Activated CD4-positive, alpha-beta T cell treated with anti-CD3 and anti-CD28 coated beads, Interleukin-2, amount 10 ng/mL, durations not matched to agents 24 days and 14 days (primary cell): ENCODE measurements at regions of chr10 and their contacts with region 1.

Region 1: DNA sequence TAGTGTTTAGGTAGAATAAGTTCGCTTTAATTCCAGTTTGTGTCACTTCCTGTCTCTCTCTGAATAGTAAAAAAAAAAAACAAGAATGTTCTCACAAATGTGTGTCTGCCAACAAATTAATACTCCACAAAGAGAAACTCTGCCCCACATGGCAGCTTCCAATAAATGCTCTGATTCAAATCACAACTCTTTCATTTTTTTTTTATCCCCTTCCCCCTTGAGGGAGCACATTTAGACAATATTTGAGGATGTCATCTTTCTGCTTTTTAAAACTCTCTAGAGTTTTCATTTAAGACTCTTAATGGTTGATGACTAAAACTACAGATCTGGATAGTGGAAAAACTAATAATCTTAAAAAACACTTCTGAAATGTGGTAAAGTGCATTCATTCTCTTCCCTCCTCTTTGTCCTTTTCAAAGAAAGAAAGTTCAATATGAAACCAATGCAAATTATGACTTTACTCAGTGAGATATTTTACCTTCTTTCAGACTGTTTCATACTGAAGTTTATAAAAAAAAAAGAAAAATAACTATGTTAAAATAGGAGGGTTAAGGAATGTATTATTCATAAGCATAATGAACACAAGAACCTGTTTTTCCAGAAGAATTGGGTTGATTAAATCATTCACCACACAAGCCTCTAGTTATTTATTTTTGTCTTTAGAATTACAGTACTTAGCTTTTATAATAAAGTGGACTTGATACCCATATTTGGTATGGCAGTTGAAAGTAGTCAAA is 42.3 kb downstream of the ARID5B start:
- DNase-seq: peak; percentile 73
- H3K4me3 Mint-ChIP-seq: peak overlapping the region; percentile 82
- H3K27ac Mint-ChIP-seq: peak overlapping the region; percentile 93
- H3K4me1 Mint-ChIP-seq: peaks cover 49% of the 10 kb centered on the region
- H3K27me3 Mint-ChIP-seq: no peaks in the 10 kb centered on the region

Region 2: DNA sequence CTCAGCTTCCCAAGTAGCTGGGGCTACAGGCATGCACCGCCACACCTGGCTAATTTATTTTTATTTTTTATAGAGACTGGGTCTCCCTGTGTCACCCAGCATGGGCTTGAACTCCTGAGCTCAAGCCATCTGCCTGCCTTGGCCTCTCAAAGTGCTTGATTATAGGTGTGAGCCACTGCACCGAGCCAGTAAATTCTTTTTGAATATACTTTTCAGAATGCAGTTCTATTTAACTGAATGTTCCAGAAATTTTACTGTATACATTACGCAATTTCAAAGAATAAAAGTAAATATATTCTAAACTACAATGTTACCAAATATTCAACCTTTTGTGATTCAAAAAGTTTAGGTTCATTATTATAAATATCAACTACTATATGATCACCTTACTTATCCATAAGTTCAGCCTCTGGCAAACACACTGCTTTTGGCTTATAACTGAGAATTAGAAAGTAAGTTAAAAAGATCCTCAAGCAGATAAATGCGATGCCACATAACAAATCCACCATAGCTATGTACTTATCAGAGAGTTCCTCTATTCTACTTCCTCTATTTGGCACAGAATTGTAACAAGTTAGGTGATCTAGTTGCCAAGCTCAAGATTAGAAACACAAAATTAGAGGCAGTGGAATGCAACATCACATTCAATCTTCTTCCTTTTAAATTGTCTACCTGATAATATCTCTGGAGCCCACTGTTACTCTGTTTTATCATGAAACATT is 1672.4 kb before region 1 on chr10:
- intact Hi-C with region 1: no loop called
- DNase-seq: no peak
- H3K4me3 Mint-ChIP-seq: no peak overlapping the region
- H3K27ac Mint-ChIP-seq: no peak overlapping the region
- H3K4me1 Mint-ChIP-seq: no peaks in the 10 kb centered on the region
- H3K27me3 Mint-ChIP-seq: no peaks in the 10 kb centered on the region

Region 3: DNA sequence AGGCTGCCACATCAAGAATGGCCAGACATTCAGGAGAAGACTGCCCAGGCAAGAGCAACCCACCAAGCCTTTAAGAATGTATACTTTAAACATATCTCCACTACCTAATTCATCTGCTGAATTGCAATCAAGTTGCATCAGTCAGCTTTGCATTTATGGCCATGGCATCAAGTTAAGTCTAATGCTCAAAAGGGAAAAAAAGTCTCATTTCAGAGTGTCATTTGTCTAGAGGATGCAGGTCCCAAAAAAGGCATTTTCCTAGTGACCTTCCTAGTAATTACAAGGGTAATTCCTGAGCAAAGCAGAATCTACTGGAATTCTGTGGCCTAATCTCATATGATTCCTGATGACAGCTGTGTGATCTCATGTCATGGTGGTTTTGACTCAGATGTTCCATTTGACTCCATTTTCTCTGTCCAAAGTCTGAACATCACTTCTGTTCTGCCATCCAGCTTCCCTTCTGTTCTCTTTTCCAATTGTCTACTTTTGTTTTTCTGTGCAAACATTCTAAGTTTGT is 288.4 kb before region 1 on chr10:
- intact Hi-C with region 1: no loop called
- DNase-seq: no peak
- H3K4me3 Mint-ChIP-seq: no peak overlapping the region
- H3K27ac Mint-ChIP-seq: no peak overlapping the region
- H3K4me1 Mint-ChIP-seq: no peaks in the 10 kb centered on the region
- H3K27me3 Mint-ChIP-seq: peaks cover 14% of the 10 kb centered on the region

Region 4: GRCh38 chr10:61882621-61883373 is 61.0 kb before region 1 on chr10:
- intact Hi-C with region 1: loop called (anchors 1 kb)
- DNase-seq: no peak
- H3K4me3 Mint-ChIP-seq: peak overlapping the region; percentile 32
- H3K27ac Mint-ChIP-seq: peak overlapping the region; percentile 79
- H3K4me1 Mint-ChIP-seq: peaks cover 16% of the 10 kb centered on the region
- H3K27me3 Mint-ChIP-seq: peaks cover 2% of the 10 kb centered on the region

Region 5: DNA sequence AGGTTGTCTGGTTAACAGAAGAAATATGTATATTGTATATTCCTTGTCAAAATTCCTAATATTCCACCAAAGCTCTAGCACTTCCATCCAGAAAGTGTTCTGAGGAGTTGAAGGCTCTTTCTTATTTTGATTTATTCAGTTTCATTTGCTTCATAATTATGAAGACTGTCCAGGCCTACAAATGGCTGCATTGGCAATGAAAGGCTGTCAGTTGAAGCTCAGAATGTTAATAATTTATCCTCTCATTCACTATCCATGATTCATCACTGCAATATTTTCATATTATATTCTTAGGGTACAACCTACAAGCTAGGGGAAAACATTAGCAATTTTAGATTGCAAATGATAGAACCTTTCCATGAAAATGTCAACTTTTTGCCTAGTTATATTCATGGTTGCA is 15.0 kb after region 1 on chr10:
- intact Hi-C with region 1: loop called (anchors 1 kb)
- DNase-seq: no peak
- H3K4me3 Mint-ChIP-seq: no peak overlapping the region
- H3K27ac Mint-ChIP-seq: peak overlapping the region; percentile 45
- H3K4me1 Mint-ChIP-seq: peaks cover 71% of the 10 kb centered on the region
- H3K27me3 Mint-ChIP-seq: no peaks in the 10 kb centered on the region

Region 6: DNA sequence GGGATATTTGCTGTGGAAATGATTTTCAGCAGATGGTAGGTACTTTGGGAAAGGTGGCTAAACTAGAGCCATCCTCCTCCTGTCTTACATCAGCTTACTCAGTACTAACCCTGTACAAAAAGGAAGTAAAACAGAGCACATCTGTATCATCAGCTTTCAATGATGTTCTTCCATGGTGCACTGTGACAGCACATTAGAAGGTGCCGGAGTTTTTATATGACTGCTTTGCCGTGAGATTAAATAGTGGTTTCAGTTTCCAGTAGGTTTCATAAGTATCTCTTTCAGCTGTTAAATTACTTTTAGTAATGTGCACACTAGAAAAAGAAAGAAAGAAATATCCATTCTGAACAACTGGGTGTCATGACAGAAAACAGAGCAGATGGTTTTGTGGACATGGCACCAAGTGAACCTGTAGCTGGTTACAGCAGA is 44.1 kb after region 1 on chr10:
- intact Hi-C with region 1: loop called (anchors 1 kb)
- DNase-seq: peak; percentile 84
- H3K4me3 Mint-ChIP-seq: peak overlapping the region; percentile 72
- H3K27ac Mint-ChIP-seq: peak overlapping the region; percentile 96
- H3K4me1 Mint-ChIP-seq: peaks cover 71% of the 10 kb centered on the region
- H3K27me3 Mint-ChIP-seq: no peaks in the 10 kb centered on the region

Region 7: DNA sequence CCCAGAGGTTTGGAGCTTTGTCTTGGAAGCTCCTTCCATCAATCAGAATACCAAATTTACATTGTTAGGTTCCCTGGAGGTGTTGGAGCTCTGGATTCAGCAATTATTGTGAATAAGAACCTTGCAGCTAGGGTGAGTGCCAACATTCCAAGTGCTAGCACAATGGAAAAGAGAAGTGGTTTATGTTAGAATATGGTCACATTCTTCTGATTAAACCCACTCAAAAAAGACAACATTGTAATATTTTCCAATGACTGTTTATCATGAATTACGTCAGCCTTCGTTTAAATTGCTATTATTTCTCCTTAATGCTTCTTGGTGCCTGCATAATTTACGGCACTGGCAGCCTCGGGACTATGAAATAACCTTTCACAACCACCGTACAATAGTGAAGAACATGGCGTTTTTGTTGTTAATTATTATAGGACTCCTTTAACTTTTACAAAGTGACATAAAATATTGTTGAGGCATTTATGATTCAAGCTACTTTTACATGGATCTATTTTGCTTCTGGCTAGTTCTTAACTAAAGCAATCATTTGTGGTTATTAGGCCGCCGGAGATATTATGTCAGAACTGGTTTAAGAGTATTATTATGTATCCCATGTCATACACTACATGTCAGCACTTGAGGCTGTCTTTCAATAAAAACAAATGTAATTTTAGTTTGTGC is 75.3 kb after region 1 on chr10:
- intact Hi-C with region 1: loop called (anchors 1 kb)
- DNase-seq: no peak
- H3K4me3 Mint-ChIP-seq: peak overlapping the region; percentile 41
- H3K27ac Mint-ChIP-seq: peak overlapping the region; percentile 93
- H3K4me1 Mint-ChIP-seq: peaks cover 53% of the 10 kb centered on the region
- H3K27me3 Mint-ChIP-seq: no peaks in the 10 kb centered on the region

Region 8: DNA sequence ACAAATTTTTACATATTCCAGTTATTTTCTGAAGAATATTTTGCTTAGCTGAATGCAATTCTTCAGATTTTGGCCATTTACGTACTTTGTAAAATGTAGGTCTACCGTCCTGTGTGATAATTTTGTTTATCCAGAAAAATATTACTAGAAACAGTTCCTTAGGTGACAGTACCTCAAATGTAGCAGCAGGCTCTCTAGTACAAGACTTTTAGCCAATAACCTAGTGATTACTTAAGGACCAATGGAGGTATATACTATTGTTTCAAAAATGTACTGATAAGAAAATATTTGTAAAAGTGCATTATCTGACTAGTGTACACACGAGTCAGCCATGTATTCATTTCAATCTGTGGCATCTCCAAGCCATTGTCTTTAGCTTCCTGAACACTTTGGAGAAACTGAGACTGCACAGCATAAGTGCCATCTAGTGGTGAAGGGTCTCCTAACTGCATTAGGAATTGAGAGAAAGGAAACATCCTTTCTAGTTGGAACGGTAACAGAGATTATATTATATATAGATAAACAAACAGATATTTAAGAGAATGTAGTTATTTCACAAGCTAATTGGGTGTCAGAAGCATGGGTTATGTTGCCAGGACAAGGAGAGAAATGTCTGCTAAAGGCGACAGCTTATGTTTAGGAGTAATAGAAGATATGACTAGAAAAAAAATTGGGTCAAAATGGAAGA is 301.1 kb after region 1 on chr10:
- intact Hi-C with region 1: loop called (anchors 1 kb)
- DNase-seq: peak; percentile 90
- H3K4me3 Mint-ChIP-seq: peak overlapping the region; percentile 69
- H3K27ac Mint-ChIP-seq: peak overlapping the region; percentile 82
- H3K4me1 Mint-ChIP-seq: peaks cover 36% of the 10 kb centered on the region
- H3K27me3 Mint-ChIP-seq: no peaks in the 10 kb centered on the region